A673 (cell line): ENCODE measurements at regions of chr7 and their contacts with region 1.

Region 1: DNA sequence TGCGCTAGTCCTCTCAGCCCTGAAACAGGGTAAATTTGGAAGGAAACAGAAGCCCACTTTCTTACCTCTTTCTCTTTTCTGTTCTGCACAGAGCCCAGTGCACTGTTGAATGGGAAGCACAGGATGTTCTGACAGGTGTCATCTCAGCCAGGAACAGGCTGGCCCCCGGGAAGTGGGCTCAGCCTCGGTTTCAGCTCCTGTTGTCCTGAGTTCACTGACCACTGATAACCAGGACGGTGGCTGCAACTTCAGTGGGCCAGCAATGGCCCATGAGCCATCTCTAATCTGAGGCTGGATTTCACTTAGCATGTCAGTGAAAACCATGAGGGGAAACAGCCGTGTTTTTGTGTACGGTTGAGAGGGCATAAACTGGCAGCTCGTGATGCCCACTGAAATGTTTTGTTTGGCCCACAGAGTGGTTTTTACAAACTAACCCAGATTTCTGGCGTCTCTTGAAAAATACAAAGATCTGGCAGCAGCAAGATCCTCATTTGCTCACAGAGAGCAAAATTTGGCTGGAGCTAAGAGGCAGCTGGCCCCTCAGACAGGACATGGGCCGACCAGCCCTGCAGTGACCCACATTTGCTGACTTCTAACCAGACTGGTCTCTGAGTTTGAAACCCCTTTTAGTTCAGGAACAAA is 455.9 kb downstream of the PAXIP1 start:
- DNase-seq: no peak
- H3K4me3 ChIP-seq: no peak overlapping the region
- H3K27ac ChIP-seq: no peak overlapping the region
- H3K4me1 ChIP-seq: no peaks in the 10 kb centered on the region
- H3K27me3 ChIP-seq: no peaks in the 10 kb centered on the region
- CTCF ChIP-seq: no peak

Region 2: GRCh38 chr7:154201457-154201856 is 345.6 kb before region 1 on chr7:
- CTCF ChIA-PET with region 1: no interaction called
- POLR2A ChIA-PET with region 1: no interaction called
- intact Hi-C with region 1: no loop called
- DNase-seq: no peak
- H3K4me3 ChIP-seq: no peak overlapping the region
- H3K27ac ChIP-seq: no peak overlapping the region
- H3K4me1 ChIP-seq: no peaks in the 10 kb centered on the region
- H3K27me3 ChIP-seq: no peaks in the 10 kb centered on the region
- CTCF ChIP-seq: no peak

Region 3: GRCh38 chr7:154255324-154255723 is 291.7 kb before region 1 on chr7:
- CTCF ChIA-PET with region 1: no interaction called
- POLR2A ChIA-PET with region 1: no interaction called
- intact Hi-C with region 1: loop called (anchors 5 kb)
- DNase-seq: no peak
- H3K4me3 ChIP-seq: no peak overlapping the region
- H3K27ac ChIP-seq: no peak overlapping the region
- H3K4me1 ChIP-seq: no peaks in the 10 kb centered on the region
- H3K27me3 ChIP-seq: no peaks in the 10 kb centered on the region
- CTCF ChIP-seq: no peak